HepG2 (cell line): ENCODE measurements at regions of chr14 and their contacts with region 1.

Region 1: DNA sequence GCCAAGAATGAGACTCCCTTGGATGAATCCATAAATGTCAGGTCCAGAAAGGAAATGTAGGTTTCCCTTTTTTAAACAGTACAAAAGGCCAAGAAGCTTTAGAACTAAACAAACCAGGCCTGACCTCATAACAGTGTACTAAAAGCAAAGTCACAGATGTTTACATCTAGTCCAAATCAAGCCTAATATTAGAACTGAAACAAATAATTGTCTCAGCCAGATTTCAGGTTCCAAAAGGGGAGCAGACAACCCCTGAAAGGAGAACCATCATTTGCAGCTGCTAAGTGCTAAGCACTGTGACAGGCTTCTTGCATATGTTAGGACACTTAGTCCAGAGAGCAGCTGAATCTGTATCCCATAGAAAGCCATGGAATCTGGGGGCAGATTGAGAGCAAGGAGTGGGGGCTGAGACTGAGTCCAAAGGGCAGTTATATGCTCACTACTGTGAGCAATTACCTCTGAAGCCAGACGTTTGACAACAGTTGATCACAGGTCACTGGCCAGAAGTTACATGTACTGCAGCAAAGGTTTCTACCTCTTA is 90.1 kb downstream of the STXBP6 start:
- DNase-seq: peak; percentile 90
- ATAC-seq: peak; percentile 99
- H3K4me3 ChIP-seq: no peak overlapping the region; a peak in 1 of 6 replicates
- H3K27ac ChIP-seq: peak overlapping the region; percentile 10
- H3K4me1 ChIP-seq: peaks cover 32% of the 10 kb centered on the region
- H3K27me3 ChIP-seq: no peaks in the 10 kb centered on the region
- CTCF ChIP-seq: peak; percentile 15; the same call in 1 of the 2 replicates
- EP300 ChIP-seq: peak in 1 of 2 experiments; percentile 60; a peak in 2 of 4 replicates
- POLR2A ChIP-seq: no peak
- RAD21 ChIP-seq: no peak

Region 2: DNA sequence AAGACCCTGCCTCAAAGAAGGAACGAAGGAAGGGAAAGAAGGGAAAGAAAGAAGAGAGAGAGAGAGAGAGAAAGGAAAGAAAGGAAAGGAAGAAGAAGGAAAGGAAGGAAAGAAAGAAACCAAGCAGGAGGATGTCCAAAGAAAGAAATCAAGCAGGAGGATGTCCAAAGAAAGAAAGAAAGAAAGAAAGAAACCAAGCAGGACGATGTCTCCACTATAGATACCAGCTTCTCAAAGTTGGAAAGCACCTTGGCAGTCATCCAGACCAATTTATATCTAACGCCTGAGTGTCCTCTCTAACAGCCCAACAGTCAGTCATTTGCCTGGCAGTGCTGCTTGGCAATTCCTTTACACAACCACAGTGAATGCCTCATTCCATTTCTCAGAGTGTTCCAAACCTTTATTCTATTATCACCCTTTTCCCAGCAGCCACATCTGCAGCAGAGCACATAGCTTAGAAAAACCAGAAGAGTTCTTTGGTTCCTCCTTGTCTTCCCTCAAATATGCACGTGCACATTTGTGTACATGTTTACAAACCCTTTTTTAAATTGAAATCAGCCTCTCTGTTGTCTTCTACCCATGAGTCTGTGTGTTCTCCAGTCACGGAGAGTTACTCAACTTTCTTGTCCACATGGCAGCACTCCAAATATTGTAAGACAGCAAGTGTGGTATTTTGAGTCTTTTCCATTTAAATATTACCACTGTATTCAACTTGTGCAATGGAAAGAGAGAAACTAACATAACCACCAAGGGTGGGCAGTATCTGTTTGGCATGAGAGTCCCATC is 48.3 kb before region 1 on chr14:
- CTCF ChIA-PET with region 1: no interaction called
- POLR2A ChIA-PET with region 1: no interaction called
- in situ Hi-C with region 1: no loop called
- intact Hi-C with region 1: loop called (anchors 2 kb)
- DNase-seq: no peak
- ATAC-seq: no peak
- H3K4me3 ChIP-seq: no peak overlapping the region
- H3K27ac ChIP-seq: no peak overlapping the region
- H3K4me1 ChIP-seq: peaks cover 64% of the 10 kb centered on the region
- H3K27me3 ChIP-seq: no peaks in the 10 kb centered on the region
- CTCF ChIP-seq: no peak
- EP300 ChIP-seq: no peak
- POLR2A ChIP-seq: no peak
- RAD21 ChIP-seq: no peak

Region 3: GRCh38 chr14:25308244-25308643 is 348.4 kb after region 1 on chr14:
- CTCF ChIA-PET with region 1: no interaction called
- POLR2A ChIA-PET with region 1: no interaction called
- in situ Hi-C with region 1: no loop called
- intact Hi-C with region 1: no loop called
- DNase-seq: peak; percentile 23
- ATAC-seq: peak; percentile 94
- H3K4me3 ChIP-seq: no peak overlapping the region
- H3K27ac ChIP-seq: no peak overlapping the region
- H3K4me1 ChIP-seq: no peaks in the 10 kb centered on the region
- H3K27me3 ChIP-seq: no peaks in the 10 kb centered on the region
- CTCF ChIP-seq: peak; percentile 39
- EP300 ChIP-seq: no peak
- POLR2A ChIP-seq: no peak
- RAD21 ChIP-seq: no peak